Activated T-helper 2 cell treated with anti-CD3 and anti-CD28 coated beads, Interferon-gamma antibody, Interleukin-2, Interleukin-4, amounts not matched to agents 10 μg/mL and 5 μg/mL and 100 μg/mL, durations not matched to agents 14 hours and 24 hours and 36 hours (primary cell): ENCODE measurements at regions of chr22 and their contacts with region 1.

Region 1: DNA sequence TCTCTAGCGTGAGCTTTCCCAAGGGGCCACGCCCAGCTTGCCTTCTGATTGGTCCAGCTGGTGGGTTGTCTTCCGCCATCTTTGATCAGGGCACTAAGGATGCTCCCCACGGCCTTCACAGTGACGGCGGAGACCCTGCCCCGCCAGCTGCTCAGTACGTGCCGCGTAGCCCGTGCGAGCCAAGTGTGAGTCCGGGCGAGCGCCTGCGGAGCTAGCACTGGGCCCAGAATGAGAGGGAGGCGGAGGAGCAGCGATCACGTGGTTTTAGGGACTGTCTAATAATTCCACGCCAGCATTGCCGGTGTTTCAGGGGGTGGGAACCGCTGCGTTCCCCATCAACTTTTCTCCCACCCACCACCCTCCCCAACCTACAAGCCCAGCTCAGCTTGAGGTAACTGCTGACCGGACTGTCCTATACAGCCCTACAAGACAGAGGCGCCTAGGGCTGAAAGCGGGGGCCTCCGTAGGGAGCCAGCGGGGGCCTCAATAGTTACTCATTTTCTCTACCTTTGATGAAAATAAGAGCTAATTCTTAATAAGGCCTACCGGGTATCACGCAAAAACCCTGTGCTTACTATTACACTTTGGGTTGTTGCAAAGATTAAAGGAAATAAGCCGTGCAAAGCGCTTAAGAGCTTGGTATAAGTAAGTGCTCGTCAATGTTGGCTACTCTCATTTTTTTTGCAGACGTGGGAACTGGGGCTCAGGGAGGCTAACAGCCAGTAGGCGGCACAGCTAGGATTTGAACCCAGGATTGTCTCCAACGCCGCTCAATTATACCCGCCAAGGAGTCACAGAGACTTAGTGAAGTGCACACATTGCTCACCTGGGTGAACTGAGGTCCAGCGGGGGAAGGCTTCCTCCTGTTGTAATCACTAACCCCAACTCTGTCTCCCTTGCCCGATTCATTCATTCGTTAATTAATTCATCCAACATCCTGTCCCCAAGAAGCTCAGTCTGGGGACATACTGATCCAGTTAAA is 1.3 kb upstream of the MTFP1 start:
- DNase-seq: peak; percentile 98
- H3K4me3 Mint-ChIP-seq: peak overlapping the region; percentile 95
- H3K27ac Mint-ChIP-seq: peak overlapping the region; percentile 99
- H3K4me1 Mint-ChIP-seq: peaks cover 57% of the 10 kb centered on the region
- H3K27me3 Mint-ChIP-seq: no peaks in the 10 kb centered on the region

Region 2: GRCh38 chr22:30169002-30169401 is 255.3 kb before region 1 on chr22:
- intact Hi-C with region 1: loop called (anchors 5 kb)
- DNase-seq: no peak
- H3K4me3 Mint-ChIP-seq: no peak overlapping the region
- H3K27ac Mint-ChIP-seq: no peak overlapping the region
- H3K4me1 Mint-ChIP-seq: peaks cover 23% of the 10 kb centered on the region
- H3K27me3 Mint-ChIP-seq: no peaks in the 10 kb centered on the region

Region 3: DNA sequence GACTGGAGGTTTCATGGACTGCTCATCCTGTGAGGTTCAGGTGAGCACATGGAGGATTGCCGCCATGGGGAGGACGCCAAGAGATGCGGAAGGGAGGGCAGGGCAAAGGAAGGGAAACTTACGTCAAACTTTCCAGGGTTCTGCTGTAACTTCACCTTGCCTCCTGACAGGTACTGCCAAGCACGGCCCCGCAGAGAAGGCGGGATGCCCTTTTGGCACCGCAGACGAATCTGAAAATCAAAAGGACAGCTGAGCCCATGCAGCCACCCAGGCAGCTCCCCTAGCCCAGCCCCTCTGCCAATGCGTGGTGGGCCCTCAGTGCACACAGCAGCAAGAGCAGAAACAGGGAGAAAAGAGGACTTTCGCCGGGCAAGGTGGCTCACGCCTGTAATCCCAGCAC is 125.0 kb before region 1 on chr22:
- intact Hi-C with region 1: no loop called
- DNase-seq: no peak
- H3K4me3 Mint-ChIP-seq: no peak overlapping the region
- H3K27ac Mint-ChIP-seq: no peak overlapping the region
- H3K4me1 Mint-ChIP-seq: peaks cover 50% of the 10 kb centered on the region
- H3K27me3 Mint-ChIP-seq: no peaks in the 10 kb centered on the region

Region 4: GRCh38 chr22:30326706-30327362 is 97.4 kb before region 1 on chr22 and contains the start of gene TBC1D10A:
- intact Hi-C with region 1: loop called (anchors 5 kb)
- DNase-seq: peak; percentile 91
- H3K4me3 Mint-ChIP-seq: peak within 1 kb of the TSS; percentile 76
- H3K27ac Mint-ChIP-seq: peak within 1 kb of the TSS; percentile 75
- H3K4me1 Mint-ChIP-seq: peaks cover 47% of the 10 kb centered on the region
- H3K27me3 Mint-ChIP-seq: no peaks in the 10 kb centered on the region
- total RNA-seq, gene TBC1D10A: 26.8 and 29.4 TPM in 2 replicates

Region 5: GRCh38 chr22:30396871-30397655 is 27.2 kb before region 1 on chr22 and contains the start of gene SEC14L2:
- intact Hi-C with region 1: loop called (anchors 1 kb)
- DNase-seq: peak; percentile 45
- H3K4me3 Mint-ChIP-seq: peak within 1 kb of the TSS; percentile 90
- H3K27ac Mint-ChIP-seq: peak within 1 kb of the TSS; percentile 51
- H3K4me1 Mint-ChIP-seq: peaks cover 42% of the 10 kb centered on the region
- H3K27me3 Mint-ChIP-seq: no peaks in the 10 kb centered on the region
- total RNA-seq, gene SEC14L2: 32.7 and 36.2 TPM in 2 replicates

Region 6: DNA sequence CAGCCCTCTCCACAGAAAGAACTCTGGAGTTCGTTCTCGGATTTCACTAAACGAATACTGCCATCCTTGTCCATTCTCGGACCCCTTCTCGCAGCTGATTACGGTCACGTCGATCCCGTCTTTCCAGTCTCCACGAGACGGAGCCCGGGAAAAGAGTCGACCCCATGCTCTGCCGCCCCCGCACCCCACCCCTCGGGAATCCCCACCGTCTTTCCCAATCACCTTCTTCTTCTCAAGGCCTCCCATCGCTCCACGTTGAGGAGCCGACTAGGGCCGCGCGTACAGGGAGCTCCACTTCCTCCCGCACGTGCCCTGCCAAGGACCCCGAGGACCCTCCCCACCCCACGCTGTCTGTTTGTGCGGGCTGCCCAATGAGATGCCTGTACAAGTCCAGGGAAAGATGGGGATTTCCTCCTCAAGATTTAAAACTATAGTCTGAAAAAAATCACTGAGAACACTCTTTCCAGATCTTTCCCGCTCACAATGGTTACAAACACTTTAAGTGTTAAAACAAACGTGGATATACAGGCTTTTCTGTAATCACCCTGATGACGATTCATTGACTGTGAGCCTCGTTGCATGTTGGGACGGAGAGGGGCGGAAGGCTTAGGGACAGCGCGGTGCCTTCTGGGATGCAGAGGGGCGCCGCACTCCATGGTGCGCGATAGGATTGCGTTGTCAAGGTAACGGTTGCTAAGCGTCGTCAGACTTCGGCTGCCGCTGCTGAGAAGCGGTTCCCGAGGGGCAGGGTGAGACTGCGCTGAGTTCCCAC is 167.5 kb after region 1 on chr22 and contains the start of gene PES1:
- intact Hi-C with region 1: loop called (anchors 5 kb)
- DNase-seq: peak; percentile 93
- H3K4me3 Mint-ChIP-seq: no peak within 1 kb of the TSS
- H3K27ac Mint-ChIP-seq: no peak within 1 kb of the TSS
- H3K4me1 Mint-ChIP-seq: peaks cover 14% of the 10 kb centered on the region
- H3K27me3 Mint-ChIP-seq: peaks cover 12% of the 10 kb centered on the region
- total RNA-seq, gene PES1: 129 and 132 TPM in 2 replicates